Left colon (tissue), 2 donors: ENCODE measurements at regions of chr11 and their contacts with region 1.

Region 1: DNA sequence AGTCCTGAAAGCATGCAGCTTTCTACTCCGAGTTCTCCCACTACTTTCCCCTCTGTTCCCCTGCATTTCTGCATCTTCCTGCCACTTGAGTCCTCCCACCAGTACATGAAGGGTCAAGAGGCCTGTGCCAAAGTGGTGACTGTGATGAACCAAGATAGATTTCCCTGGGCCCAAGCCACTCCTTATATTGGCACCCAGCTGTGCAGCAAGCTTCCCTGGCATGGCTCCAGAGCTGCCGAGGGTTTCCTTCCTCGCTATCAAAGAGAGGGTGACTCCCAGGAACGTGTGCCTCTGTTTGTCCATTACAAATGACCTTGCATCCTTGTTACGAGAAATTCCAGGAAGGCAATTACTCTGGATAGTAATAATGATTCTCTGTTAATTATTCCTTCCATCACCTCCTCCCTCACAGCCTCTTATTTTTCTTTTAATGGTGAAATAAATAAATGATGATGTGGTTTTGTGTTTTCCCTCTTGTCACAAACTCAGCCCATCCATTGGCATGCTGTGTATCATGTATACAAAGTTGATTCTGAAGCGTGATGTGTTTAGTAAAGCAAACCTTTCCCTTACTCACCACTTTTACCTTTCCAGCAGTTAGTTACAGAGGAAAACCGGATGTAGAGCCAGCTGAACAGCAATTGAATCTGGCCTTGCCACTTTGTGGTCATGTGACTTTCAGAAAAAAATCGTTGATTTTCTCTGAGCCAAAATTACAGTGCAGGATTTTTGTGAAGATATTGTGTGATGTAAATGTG is 8.3 kb downstream of the SRSF8 start:
- DNase-seq: peak; percentile 87
- ATAC-seq: peak; percentile 91

Region 2: DNA sequence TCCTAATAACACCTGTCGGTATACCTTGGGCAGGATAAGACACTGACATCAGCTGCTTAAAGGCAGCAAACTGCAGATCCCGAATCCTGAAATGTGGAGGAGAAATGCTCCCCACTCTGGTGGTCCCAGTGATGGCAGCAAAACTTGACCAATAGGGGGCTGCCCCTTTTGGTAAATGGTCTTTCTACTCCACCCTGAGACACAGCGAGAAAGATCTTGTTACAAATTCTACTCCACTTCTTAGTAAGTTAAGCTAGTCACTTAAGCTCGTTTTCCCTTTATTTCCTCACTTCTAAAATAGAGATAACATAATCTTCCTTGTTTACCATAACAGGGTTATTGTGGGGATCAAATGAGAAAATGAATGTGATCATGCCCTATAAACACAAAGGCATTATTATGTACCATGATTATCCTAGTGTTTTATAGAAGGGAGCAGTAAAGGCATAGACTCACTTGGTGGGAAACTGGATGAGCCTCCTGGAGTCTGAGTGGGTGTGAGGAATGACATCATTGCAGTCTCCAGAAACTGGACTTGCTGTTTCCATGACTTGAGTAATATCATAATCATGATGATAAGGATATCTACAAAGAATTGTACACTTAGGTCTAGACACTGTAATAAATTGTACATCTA is 65.5 kb after region 1 on chr11:
- intact Hi-C with region 1: loop called in 1 of 2 experiments (anchors 5 kb)
- DNase-seq: no peak
- ATAC-seq: peak; percentile 72